CD8-positive, alpha-beta memory T cell (primary cell): ENCODE measurements at regions of chr12 and their contacts with region 1.

Region 1: GRCh38 chr12:108664338-108665258 is 30.9 kb upstream of the SELPLG start:
- DNase-seq: peak; percentile 61 to 86 (median 71)
- H3K4me3 ChIP-seq: no peak overlapping the region
- H3K4me3 Mint-ChIP-seq: peak overlapping the region in 1 of 7 donors; percentile 45
- H3K27ac ChIP-seq: no peak overlapping the region
- H3K27ac Mint-ChIP-seq: peak overlapping the region; percentile 49 to 95 (median 88)
- H3K4me1 ChIP-seq: peaks cover 7% of the 10 kb centered on the region
- H3K4me1 Mint-ChIP-seq: peaks cover 6 to 14% (median 11%) of the 10 kb centered on the region in 3 donors
- H3K27me3 ChIP-seq: no peaks in the 10 kb centered on the region
- H3K27me3 Mint-ChIP-seq: no peaks in the 10 kb centered on the region

Region 2: DNA sequence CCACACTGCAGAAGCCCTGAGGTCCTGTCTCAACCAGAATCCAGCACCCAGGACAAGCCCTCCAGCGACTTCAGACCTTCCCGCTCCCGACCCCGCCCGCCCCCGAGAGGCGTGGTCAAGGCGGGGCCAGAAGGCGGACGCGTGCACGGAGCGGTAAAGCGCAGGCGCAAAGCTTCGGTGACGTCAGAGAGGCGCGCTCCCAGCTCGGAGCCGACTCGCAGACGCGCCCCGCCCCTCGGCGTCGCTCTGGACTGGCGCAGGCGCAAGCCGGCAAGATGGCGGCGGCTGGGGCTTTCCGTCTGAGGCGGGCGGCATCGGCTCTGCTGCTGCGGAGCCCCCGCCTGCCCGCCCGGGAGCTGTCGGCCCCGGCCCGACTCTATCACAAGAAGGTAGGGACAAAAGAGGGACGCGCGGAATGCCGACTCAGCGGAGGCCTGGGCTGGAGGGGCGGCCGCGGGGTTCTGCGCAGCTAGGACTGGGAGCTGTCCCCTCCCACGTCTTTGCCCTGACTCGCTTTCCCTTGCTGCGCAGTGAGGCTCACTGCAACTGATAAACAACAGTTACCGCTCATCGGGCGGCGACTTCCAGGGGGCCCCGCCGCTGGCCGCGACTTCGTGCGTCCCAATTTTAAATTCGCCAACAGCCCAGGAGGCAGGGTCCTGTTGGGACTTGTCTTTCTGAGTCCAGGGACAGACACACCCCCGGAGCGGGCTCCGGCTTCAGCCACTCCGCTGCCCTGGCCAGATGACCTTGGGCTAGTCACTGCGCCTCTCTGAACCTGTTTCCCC is 102.1 kb before region 1 on chr12 and contains the start of gene ISCU:
- CTCF ChIA-PET with region 1: interaction called, 14 read pairs
- POLR2A ChIA-PET with region 1: no interaction called
- DNase-seq: peak; percentile 98 to 100 (median 99)
- H3K4me3 ChIP-seq: peak within 1 kb of the TSS; percentile 96
- H3K4me3 Mint-ChIP-seq: peak within 1 kb of the TSS; percentile 98 to 100 (median 100)
- H3K27ac ChIP-seq: peak within 1 kb of the TSS; percentile 93
- H3K27ac Mint-ChIP-seq: peak within 1 kb of the TSS; percentile 97 to 100 (median 100)
- H3K4me1 ChIP-seq: peaks cover 59% of the 10 kb centered on the region
- H3K4me1 Mint-ChIP-seq: peaks cover 50 to 83% (median 76%) of the 10 kb centered on the region in 3 donors
- H3K27me3 ChIP-seq: no peaks in the 10 kb centered on the region
- H3K27me3 Mint-ChIP-seq: no peaks in the 10 kb centered on the region
- total RNA-seq, gene ISCU: 113 to 116 TPM

Region 3: GRCh38 chr12:108570743-108571608 is 93.6 kb before region 1 on chr12:
- CTCF ChIA-PET with region 1: interaction called, 13 read pairs
- POLR2A ChIA-PET with region 1: no interaction called
- DNase-seq: no peak
- H3K4me3 ChIP-seq: no peak overlapping the region
- H3K4me3 Mint-ChIP-seq: no peak overlapping the region
- H3K27ac ChIP-seq: no peak overlapping the region
- H3K27ac Mint-ChIP-seq: peak overlapping the region; percentile 61 to 95 (median 86)
- H3K4me1 ChIP-seq: peaks cover 56% of the 10 kb centered on the region
- H3K4me1 Mint-ChIP-seq: peaks cover 26 to 86% (median 71%) of the 10 kb centered on the region in 3 donors
- H3K27me3 ChIP-seq: no peaks in the 10 kb centered on the region
- H3K27me3 Mint-ChIP-seq: no peaks in the 10 kb centered on the region

Region 4: DNA sequence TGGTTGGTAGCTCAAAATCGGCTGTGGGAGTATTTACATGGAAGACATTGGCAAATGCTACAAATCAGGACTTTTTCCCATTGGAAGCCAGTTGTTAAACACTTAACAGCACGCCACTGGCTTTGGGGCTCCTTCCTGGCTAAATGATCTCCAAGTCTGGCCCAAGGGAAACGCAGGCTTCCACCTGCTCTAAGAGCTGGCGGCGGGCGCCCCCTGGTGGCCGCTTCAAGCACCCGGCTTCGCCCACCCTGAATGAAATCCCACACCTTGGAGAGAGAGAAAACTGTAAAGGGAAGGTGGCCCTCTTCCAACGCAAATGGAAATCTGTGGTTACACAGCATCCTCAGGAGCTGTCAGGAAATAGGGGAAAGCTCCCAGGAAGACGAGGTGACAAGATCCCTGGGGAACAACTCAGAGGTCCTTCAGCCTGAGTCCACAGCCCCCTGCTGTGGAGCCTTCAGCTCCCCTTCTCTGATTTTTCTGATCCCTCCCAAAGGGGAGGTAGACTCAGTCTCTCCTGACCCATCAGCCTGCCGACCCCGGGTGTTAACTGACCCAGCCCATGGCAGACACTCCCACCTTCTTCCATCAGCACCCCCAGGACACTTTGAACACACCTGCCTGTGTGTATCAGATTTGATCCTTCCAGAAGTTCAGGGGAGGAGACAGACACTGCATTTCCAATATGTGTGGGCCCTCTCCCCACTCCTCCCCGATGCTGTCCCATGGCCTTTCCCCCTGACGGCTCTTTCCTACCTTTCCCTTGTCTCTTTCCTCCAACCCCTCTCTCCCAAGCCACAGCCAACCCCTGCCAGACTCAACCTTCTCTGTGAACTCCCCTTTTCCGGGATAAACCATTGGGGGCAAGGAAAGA is 46.3 kb before region 1 on chr12:
- CTCF ChIA-PET with region 1: interaction called, 47 read pairs
- POLR2A ChIA-PET with region 1: no interaction called
- DNase-seq: peak; percentile 68 to 82 (median 75)
- H3K4me3 ChIP-seq: no peak overlapping the region
- H3K4me3 Mint-ChIP-seq: peak overlapping the region; percentile 9 to 50 (median 37)
- H3K27ac ChIP-seq: no peak overlapping the region
- H3K27ac Mint-ChIP-seq: peak overlapping the region; percentile 83 to 100 (median 96)
- H3K4me1 ChIP-seq: peaks cover 56% of the 10 kb centered on the region
- H3K4me1 Mint-ChIP-seq: peaks cover 62 to 83% (median 70%) of the 10 kb centered on the region in 3 donors
- H3K27me3 ChIP-seq: no peaks in the 10 kb centered on the region
- H3K27me3 Mint-ChIP-seq: no peaks in the 10 kb centered on the region

Region 5: GRCh38 chr12:108633534-108634248 is 30.9 kb before region 1 on chr12 and contains the start of gene SELPLG:
- CTCF ChIA-PET with region 1: interaction called, 19 read pairs
- POLR2A ChIA-PET with region 1: interaction called, 6 read pairs
- DNase-seq: peak; percentile 80 to 95 (median 95)
- H3K4me3 ChIP-seq: peak within 1 kb of the TSS; percentile 87
- H3K4me3 Mint-ChIP-seq: peak within 1 kb of the TSS; percentile 91 to 100 (median 98)
- H3K27ac ChIP-seq: peak within 1 kb of the TSS; percentile 92
- H3K27ac Mint-ChIP-seq: peak within 1 kb of the TSS; percentile 92 to 100 (median 99)
- H3K4me1 ChIP-seq: peaks cover 66% of the 10 kb centered on the region
- H3K4me1 Mint-ChIP-seq: peaks cover 56 to 75% (median 69%) of the 10 kb centered on the region in 3 donors
- H3K27me3 ChIP-seq: no peaks in the 10 kb centered on the region
- H3K27me3 Mint-ChIP-seq: peaks cover 0 to 4% of the 10 kb centered on the region in 2 donors
- total RNA-seq, gene SELPLG: 37.0 to 37.7 TPM

Region 6: DNA sequence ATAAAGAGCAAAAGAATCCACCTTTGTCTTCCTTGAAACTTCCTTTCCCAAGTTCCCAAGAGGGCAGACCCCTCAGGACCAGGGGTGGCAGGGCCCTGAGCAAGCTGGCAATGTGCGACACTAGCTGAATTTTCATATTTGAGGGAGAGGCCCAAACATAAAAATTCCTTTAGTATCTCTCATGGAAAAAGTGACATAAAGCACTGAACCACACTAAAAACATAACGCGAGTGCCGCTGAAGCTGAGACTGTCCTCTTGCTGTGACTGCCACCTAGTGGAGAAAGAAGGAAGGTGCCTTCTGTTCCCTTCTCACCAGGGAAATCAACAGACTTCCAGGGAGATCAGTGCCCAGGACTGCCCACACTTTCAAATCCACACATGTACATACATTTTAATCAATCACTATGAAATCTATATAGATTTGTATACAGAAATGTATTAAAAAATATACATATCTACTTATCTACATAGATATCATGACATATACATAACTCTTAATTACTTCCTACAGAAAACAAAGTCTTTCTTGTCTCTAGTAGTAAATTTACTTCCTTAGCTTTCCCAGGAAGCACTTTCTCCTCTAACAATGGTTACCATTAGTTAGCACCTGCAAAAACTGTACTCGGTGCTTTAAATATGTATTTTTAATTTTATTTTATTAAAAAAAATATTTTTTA is 139.0 kb after region 1 on chr12:
- CTCF ChIA-PET with region 1: interaction called, 174 read pairs
- POLR2A ChIA-PET with region 1: interaction called, 3 read pairs
- DNase-seq: peak; percentile 50 to 78 (median 65)
- H3K4me3 ChIP-seq: no peak overlapping the region
- H3K4me3 Mint-ChIP-seq: no peak overlapping the region
- H3K27ac ChIP-seq: no peak overlapping the region
- H3K27ac Mint-ChIP-seq: peak overlapping the region in 3 of 8 donors; percentile 33 to 63 (median 50)
- H3K4me1 ChIP-seq: peaks cover 5% of the 10 kb centered on the region
- H3K4me1 Mint-ChIP-seq: peaks cover 4 to 8% (median 5%) of the 10 kb centered on the region in 3 donors
- H3K27me3 ChIP-seq: no peaks in the 10 kb centered on the region
- H3K27me3 Mint-ChIP-seq: no peaks in the 10 kb centered on the region

Region 7: DNA sequence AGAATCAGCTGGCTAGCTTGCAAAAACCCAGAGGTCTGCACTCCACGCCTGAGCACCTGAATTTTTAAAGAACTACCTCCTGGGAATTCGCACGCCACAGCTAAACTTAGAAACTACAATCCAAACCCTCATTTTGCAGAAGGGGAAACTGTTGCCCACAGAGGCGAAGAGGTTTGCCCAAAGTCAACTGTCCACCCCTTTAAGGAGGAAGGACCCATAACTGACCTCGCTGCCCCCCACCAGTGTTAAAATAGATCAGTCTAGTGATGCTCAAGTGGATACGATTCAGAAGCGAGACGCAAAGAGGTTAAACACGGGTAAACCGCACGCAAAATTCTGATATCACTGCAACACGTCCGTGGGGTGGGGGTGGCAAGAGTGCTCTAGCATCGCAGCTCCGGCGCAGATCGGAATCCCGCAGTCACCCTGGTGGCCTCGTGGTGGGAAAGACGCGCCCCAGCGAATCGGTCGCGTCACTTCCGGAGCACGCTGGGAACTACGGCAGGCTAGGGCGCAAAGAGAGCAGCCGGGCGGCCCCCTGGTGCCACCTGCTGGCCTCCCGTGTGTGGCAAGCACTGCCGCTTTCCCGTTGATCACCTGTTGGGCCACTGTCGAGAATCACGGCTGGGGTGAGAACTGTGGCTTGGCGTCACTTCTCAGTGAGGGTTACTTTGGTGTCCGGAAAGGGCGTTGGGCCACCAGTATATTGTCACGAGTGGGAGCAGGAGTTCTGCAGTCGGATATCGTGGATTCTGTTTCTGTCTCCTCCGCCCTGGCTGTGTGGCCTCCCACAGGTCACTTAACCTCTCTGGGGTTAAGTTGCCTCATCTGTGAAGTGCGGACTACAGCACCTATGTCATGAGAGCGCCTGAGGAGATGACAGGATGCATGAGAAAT is 428.7 kb after region 1 on chr12 and contains the start of gene ALKBH2:
- CTCF ChIA-PET with region 1: interaction called, 15 read pairs
- POLR2A ChIA-PET with region 1: no interaction called
- DNase-seq: peak; percentile 92 to 96 (median 94)
- H3K4me3 ChIP-seq: peak within 1 kb of the TSS; percentile 86
- H3K4me3 Mint-ChIP-seq: peak within 1 kb of the TSS; percentile 57 to 88 (median 83)
- H3K27ac ChIP-seq: peak within 1 kb of the TSS; percentile 70
- H3K27ac Mint-ChIP-seq: peak within 1 kb of the TSS; percentile 86 to 97 (median 94)
- H3K4me1 ChIP-seq: peaks cover 21% of the 10 kb centered on the region
- H3K4me1 Mint-ChIP-seq: peaks cover 32 to 43% (median 32%) of the 10 kb centered on the region in 3 donors
- H3K27me3 ChIP-seq: no peaks in the 10 kb centered on the region
- H3K27me3 Mint-ChIP-seq: no peaks in the 10 kb centered on the region
- total RNA-seq, gene ALKBH2: 41.3 to 42.9 TPM